ENCODE measurements at regions of chr12 and their contacts with region 1.

Region 1: DNA sequence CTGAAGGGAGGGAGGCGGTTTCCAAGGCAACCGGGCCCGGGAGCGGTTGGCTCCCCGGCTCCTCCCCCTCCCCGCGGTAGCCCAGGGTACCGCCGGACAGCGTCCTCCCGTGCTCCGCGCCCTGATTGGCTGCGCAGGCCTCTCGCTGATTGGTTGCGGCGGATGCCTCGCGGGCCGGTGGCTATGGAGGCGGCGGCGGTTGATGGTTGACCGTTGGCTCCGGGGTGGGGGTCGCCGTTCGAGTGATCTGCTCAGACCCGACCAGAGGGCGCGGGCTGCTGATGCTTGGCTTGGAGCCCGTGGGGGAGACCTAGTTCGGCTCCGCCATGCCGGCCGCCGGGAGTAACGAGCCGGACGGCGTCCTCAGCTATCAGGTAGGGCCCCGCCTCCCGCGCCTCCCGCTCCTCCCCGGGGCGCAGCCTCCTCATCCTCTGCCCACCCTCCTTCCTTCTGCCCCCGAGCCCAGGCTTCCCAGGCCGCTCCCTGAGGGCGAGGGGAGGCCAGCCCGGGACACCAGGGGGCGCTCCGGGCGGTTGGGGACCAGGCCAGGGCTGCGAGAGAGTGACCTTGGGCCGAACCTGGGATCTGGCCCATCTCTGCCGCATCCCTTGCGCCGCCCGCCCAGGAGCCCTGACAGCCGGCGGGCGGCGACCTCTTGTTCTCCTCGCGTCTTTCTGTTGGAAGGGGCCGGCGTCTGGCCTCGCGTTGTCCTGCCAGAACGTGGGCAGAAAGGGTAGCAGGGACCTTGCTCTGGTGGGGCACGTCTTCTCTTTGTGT is at the start of gene SLC4A8:
- DNase-seq: peak; percentile 89
- ATAC-seq: peak; percentile 90
- H3K4me3 Mint-ChIP-seq: peak within 1 kb of the TSS; percentile 75
- H3K27ac Mint-ChIP-seq: peak within 1 kb of the TSS; percentile 26
- H3K4me1 Mint-ChIP-seq: peaks cover 24% of the 10 kb centered on the region
- H3K27me3 Mint-ChIP-seq: peaks cover 5% of the 10 kb centered on the region
- total RNA-seq, gene SLC4A8: 11.4 to 12.6 TPM

Region 2: GRCh38 chr12:51371295-51371953 is 53.4 kb before region 1 on chr12:
- CTCF ChIA-PET with region 1: interaction called, 12 read pairs
- POLR2A ChIA-PET with region 1: no interaction called
- DNase-seq: no peak
- ATAC-seq: no peak
- H3K4me3 Mint-ChIP-seq: no peak overlapping the region
- H3K27ac Mint-ChIP-seq: peak overlapping the region; percentile 43
- H3K4me1 Mint-ChIP-seq: peaks cover 67% of the 10 kb centered on the region
- H3K27me3 Mint-ChIP-seq: no peaks in the 10 kb centered on the region

Region 3: GRCh38 chr12:51413149-51413548 is 11.7 kb before region 1 on chr12:
- CTCF ChIA-PET with region 1: interaction called, 11 read pairs
- POLR2A ChIA-PET with region 1: no interaction called
- DNase-seq: no peak
- ATAC-seq: no peak
- H3K4me3 Mint-ChIP-seq: no peak overlapping the region
- H3K27ac Mint-ChIP-seq: no peak overlapping the region
- H3K4me1 Mint-ChIP-seq: peaks cover 3% of the 10 kb centered on the region
- H3K27me3 Mint-ChIP-seq: peaks cover 2% of the 10 kb centered on the region

Region 4: DNA sequence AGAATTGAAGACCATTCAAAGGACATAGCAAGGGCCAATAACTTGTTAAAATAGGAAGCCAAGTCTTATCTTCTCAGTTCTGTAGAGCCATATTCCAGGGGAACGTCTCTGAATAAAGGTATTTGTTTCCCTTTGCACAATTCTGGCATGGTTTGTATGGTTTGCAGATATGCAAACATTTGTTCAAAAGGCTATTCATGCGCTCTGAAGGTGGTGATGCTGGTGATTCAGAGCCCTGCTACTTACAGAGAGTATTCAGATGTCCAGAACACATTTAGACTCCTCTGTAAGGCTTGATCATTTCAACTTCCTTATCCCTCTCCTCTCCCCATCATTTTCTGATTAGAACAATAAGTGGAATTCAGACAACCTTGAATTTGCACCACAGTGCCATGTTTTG is 35.7 kb after region 1 on chr12:
- CTCF ChIA-PET with region 1: no interaction called
- POLR2A ChIA-PET with region 1: no interaction called
- DNase-seq: no peak
- ATAC-seq: no peak
- H3K4me3 Mint-ChIP-seq: no peak overlapping the region
- H3K27ac Mint-ChIP-seq: no peak overlapping the region
- H3K4me1 Mint-ChIP-seq: no peaks in the 10 kb centered on the region
- H3K27me3 Mint-ChIP-seq: no peaks in the 10 kb centered on the region

Region 5: DNA sequence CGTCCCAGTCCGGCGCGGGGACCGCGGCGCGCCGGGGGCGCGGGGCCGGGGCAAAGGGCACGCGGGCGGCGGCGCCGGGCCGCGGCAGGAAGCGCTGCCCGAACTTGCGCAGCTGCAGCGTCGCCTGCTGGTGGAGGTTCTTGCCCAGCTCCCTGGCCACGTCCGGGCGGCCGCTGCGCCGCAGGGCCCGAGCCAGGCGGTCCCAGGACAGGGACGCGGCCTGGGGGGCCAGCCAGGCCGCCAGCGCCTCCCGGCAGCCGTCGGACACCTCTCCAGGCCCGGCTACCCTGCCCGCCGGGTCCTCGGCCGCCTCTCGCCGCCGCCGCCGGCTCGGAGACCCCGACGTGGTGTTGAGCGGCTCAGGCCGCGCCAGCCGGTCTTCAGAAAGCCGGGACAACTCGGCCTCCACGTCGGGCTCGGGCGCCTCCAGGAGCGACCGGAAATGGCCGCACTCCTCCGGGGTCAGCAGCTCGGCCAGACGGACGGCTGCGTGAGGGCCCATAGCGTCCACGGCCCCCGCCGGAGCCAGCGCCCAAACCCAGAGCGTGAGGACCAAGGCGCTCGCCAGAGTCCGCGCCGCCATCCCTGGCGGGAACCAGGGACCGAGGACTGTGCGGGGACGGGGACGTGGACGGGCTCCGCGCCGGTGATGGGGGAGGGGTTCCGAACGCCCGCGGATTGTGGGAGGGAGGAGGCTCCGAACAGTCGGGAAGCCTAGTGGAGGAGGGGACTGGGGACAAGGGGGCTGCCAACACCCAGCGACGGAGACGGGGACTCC is 389.6 kb after region 1 on chr12:
- CTCF ChIA-PET with region 1: interaction called, 10 read pairs
- POLR2A ChIA-PET with region 1: no interaction called
- DNase-seq: peak; percentile 76
- ATAC-seq: peak; percentile 93
- H3K4me3 Mint-ChIP-seq: peak overlapping the region; percentile 64
- H3K27ac Mint-ChIP-seq: no peak overlapping the region
- H3K4me1 Mint-ChIP-seq: peaks cover 9% of the 10 kb centered on the region
- H3K27me3 Mint-ChIP-seq: peaks cover 13% of the 10 kb centered on the region

Region 6: GRCh38 chr12:51874013-51874412 is 449.2 kb after region 1 on chr12:
- CTCF ChIA-PET with region 1: interaction called, 18 read pairs
- POLR2A ChIA-PET with region 1: no interaction called
- DNase-seq: no peak
- ATAC-seq: no peak
- H3K4me3 Mint-ChIP-seq: no peak overlapping the region
- H3K27ac Mint-ChIP-seq: no peak overlapping the region
- H3K4me1 Mint-ChIP-seq: peaks cover 7% of the 10 kb centered on the region
- H3K27me3 Mint-ChIP-seq: peaks cover 23% of the 10 kb centered on the region

Region 7: DNA sequence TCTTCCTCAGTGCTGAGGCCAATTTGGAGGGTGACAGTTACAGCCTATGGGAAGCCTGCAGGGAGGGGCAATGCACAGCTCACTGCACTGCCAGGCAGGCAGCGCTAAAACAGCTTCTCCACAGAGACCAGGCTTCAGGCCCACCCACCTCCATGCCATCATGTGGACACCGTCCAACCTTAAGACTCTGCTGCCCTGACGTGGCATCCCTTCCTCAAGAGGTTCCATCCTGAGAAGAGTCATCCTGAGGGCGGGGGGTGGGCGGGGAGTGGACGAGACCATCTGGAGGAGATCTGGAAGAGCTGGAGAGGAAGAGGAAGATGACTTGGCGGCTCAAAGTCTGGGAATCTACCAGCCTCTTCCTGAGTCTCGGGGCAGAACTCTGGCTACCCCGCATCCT is 474.1 kb after region 1 on chr12:
- CTCF ChIA-PET with region 1: no interaction called
- POLR2A ChIA-PET with region 1: no interaction called
- DNase-seq: no peak
- ATAC-seq: no peak
- H3K4me3 Mint-ChIP-seq: no peak overlapping the region
- H3K27ac Mint-ChIP-seq: no peak overlapping the region
- H3K4me1 Mint-ChIP-seq: peaks cover 3% of the 10 kb centered on the region
- H3K27me3 Mint-ChIP-seq: peaks cover 9% of the 10 kb centered on the region

Measured in activated CD8-positive, alpha-beta T cell treated with anti-CD3 and anti-CD28 coated beads, Interleukin-2, amount 10 ng/mL, durations not matched to agents 7 days and 5 days (primary cell).